Lower lobe of right lung (tissue), 2 donors: ENCODE measurements at regions of chr6 and their contacts with region 1.

Region 1: GRCh38 chr6:64330694-64331307 is 695.2 kb downstream of the PHF3 start:
- DNase-seq: peak; percentile 67
- ATAC-seq: peak in 1 of 2 donors; percentile 45
- H3K4me3 ChIP-seq: no peak overlapping the region
- H3K27ac ChIP-seq: no peak overlapping the region
- H3K4me1 ChIP-seq: no peaks in the 10 kb centered on the region
- H3K27me3 ChIP-seq: no peaks in the 10 kb centered on the region
- CTCF ChIP-seq: peak; percentile 61

Region 2: GRCh38 chr6:63923139-63923739 is 407.6 kb before region 1 on chr6:
- intact Hi-C with region 1: loop called (anchors 10 kb)
- DNase-seq: no peak
- ATAC-seq: peak; percentile 65 to 68
- H3K4me3 ChIP-seq: no peak overlapping the region
- H3K27ac ChIP-seq: no peak overlapping the region
- H3K4me1 ChIP-seq: no peaks in the 10 kb centered on the region
- H3K27me3 ChIP-seq: no peaks in the 10 kb centered on the region
- CTCF ChIP-seq: peak; percentile 61

Region 3: DNA sequence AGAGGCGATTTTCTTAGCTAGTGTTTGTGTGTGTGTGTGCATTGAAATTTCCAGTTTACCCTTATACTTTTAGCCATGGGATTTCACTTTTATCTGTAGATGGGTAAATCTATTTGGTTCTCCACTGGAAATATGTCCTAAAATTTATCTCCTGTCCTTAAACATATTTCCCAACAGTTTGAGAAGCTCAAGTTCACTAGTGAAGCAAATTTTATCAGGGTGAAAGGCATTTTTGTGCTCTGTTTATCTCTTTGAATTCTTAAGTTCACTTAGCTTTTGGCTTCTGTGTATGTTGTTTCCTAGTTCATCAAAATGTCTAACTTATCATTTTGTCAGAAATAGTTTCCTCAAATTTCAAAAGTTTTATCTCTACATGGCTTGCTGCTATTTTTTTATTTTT is 133.6 kb before region 1 on chr6:
- intact Hi-C with region 1: no loop called
- DNase-seq: no peak
- ATAC-seq: no peak
- H3K4me3 ChIP-seq: no peak overlapping the region
- H3K27ac ChIP-seq: no peak overlapping the region
- H3K4me1 ChIP-seq: no peaks in the 10 kb centered on the region
- H3K27me3 ChIP-seq: no peaks in the 10 kb centered on the region
- CTCF ChIP-seq: no peak